Activated T-helper 2 cell treated with anti-CD3 and anti-CD28 coated beads, Interferon-gamma antibody, Interleukin-2, Interleukin-4, amounts not matched to agents 10 μg/mL and 5 μg/mL and 100 μg/mL, durations not matched to agents 14 hours and 24 hours and 36 hours (primary cell): ENCODE measurements at regions of chr6 and their contacts with region 1.

Region 1: DNA sequence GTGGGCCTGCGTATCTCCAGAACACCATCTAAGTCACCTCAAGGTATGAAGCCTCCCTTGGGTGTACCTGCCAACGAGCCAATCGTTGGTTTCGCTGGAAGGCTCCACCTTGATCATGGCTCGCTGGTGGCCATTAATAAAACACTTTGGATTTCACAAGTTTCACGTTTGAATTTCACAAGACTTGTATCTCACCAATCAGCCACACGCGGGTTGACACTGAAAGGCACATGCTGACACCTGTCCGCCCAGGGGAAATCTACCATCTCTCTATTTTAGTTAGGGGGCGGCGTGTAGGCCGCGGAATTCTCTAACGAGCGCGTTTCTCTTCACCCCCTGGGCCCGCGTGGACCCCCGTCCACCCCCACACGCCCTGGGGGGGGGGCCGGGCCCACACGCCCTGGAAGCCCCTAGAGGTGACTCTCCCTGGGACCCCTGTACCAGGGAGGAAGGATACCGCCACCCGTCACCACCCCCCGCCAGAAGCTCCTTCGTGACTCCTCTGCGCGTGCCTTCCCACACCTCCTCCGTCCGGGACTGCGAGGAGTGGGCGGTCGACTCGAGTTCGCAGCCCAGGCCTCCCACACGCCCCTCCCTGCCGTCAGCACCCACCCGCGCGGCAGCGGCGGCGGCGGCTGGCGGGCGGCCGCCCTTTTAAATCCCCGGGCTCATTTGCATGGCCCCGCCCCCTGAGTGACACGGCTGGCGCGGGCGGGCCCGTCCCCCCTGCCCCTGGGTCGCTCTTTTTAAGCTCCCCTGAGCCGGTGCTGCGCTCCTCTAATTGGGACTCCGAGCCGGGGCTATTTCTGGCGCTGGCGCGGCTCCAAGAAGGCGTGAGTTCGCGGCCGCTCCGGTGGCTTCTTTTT is at the start of gene HMGA1:
- DNase-seq: peak; percentile 83
- H3K4me3 Mint-ChIP-seq: peak within 1 kb of the TSS; percentile 86
- H3K27ac Mint-ChIP-seq: peak within 1 kb of the TSS; percentile 94
- H3K4me1 Mint-ChIP-seq: peaks cover 35% of the 10 kb centered on the region
- H3K27me3 Mint-ChIP-seq: no peaks in the 10 kb centered on the region
- total RNA-seq, gene HMGA1: 412 and 422 TPM in 2 replicates

Region 2: DNA sequence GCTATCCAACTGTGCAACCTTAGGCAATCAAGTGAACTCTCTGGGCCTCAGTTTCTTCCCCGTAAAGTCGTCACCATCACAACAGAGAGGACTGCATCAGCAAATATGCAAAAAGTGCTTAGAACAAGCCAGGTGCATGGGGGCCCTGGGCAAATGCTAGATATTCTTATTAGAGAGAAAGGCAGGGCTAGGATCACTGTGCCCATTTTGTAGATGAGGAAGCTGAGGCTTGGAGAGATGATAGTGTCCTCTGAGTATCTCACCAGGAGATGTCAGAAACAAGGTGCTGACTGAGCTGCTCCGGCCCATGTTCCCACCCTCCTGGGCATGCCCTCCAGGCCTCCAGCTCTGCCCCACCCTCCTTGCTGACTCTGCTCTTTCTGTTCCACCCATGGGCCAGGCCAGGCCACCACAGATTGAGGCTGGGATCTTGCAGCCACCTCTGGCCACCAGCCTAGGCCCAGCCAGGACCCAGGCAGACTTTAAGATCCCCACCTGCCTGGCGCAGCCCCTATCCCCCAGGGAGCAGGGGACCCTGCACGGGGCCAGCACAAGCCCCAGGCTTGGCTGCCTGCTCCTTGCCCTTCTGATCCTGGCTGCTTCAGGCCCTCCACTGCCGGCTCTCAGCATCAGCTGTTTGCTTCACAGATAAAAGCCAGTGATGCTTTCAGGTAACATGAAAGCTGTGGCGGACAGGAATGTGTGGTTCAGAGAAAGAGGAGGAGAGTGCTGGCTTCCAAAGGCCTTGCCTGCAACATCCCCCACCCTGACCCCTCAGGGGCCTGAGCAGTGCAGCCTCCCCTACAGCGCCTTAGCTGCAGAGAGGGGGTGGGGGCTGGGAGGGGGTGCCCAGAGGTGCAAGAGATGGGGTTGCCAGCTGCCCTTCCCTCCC is 138.1 kb before region 1 on chr6:
- intact Hi-C with region 1: no loop called
- DNase-seq: no peak
- H3K4me3 Mint-ChIP-seq: no peak overlapping the region
- H3K27ac Mint-ChIP-seq: no peak overlapping the region
- H3K4me1 Mint-ChIP-seq: no peaks in the 10 kb centered on the region
- H3K27me3 Mint-ChIP-seq: peaks cover 17% of the 10 kb centered on the region

Region 3: GRCh38 chr6:34157851-34158250 is 78.5 kb before region 1 on chr6:
- intact Hi-C with region 1: no loop called
- DNase-seq: no peak
- H3K4me3 Mint-ChIP-seq: no peak overlapping the region
- H3K27ac Mint-ChIP-seq: no peak overlapping the region
- H3K4me1 Mint-ChIP-seq: no peaks in the 10 kb centered on the region
- H3K27me3 Mint-ChIP-seq: peaks cover 39% of the 10 kb centered on the region

Region 4: DNA sequence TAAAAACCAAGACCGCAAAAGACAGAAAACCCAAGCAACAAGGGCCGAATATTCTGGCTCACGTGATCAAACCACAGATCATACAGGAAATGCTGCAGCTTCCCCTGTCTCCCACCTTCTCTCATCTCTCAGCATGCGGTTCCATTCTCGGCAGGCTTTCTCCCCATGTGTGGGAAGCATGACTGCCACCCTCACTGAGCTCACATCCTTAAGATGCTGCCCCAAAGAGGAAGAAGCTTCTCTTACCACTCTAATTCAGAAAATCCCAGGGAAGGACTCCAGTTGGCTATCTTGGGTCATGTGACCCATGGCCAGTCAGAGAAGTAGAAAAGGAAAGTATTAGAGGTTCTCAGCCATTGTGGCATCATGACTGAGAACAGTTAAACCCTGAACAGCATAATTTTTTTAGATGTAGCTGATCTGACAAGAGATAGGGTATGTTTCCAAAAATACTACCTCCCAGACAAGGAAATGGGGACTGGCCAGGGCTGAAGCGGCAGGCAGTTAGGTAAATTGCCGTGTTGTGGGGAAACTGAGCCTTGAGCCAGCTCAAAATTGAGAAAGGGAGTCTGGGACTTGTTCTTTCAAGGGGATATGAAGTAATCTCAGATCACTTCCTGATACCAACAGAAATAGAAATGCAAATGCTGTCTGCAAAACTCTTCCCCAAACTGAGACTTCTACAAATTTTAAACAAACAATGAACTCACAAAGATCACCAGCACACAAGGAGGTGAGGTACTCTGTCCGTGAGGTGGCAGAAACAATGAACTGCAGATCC is 53.4 kb before region 1 on chr6:
- intact Hi-C with region 1: loop called (anchors 5 kb)
- DNase-seq: peak; percentile 69
- H3K4me3 Mint-ChIP-seq: peak overlapping the region; percentile 15
- H3K27ac Mint-ChIP-seq: peak overlapping the region; percentile 66
- H3K4me1 Mint-ChIP-seq: peaks cover 11% of the 10 kb centered on the region
- H3K27me3 Mint-ChIP-seq: peaks cover 3% of the 10 kb centered on the region

Region 5: GRCh38 chr6:34196126-34196830 is 40.1 kb before region 1 on chr6:
- intact Hi-C with region 1: loop called (anchors 5 kb)
- DNase-seq: peak; percentile 77
- H3K4me3 Mint-ChIP-seq: peak overlapping the region; percentile 79
- H3K27ac Mint-ChIP-seq: no peak overlapping the region
- H3K4me1 Mint-ChIP-seq: peaks cover 6% of the 10 kb centered on the region
- H3K27me3 Mint-ChIP-seq: peaks cover 13% of the 10 kb centered on the region

Region 6: GRCh38 chr6:34223956-34224940 is 12.1 kb before region 1 on chr6:
- intact Hi-C with region 1: loop called (anchors 1 kb)
- DNase-seq: peak; percentile 91
- H3K4me3 Mint-ChIP-seq: peak overlapping the region; percentile 60
- H3K27ac Mint-ChIP-seq: peak overlapping the region; percentile 84
- H3K4me1 Mint-ChIP-seq: peaks cover 24% of the 10 kb centered on the region
- H3K27me3 Mint-ChIP-seq: peaks cover 3% of the 10 kb centered on the region

Region 7: DNA sequence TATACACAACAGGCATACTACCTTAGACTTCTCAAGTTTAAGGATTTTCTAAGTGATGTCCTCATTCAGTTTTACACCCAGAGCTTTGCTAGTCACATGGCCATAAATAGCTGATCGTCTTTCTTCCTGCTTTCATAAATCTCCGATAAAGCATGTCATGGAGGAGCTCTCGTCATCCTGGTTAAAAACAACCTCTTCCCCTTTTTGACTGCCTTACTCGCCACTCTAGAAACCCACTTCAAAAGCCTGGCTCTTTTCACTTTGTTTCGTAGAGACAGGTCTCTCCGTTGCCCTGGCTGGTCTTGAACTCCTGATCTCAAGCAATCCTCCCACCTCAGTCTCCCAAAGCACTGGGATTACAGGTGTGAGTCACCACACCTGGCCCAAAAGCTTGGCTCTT is 79.4 kb after region 1 on chr6:
- intact Hi-C with region 1: no loop called
- DNase-seq: peak; percentile 11
- H3K4me3 Mint-ChIP-seq: peak overlapping the region; percentile 5
- H3K27ac Mint-ChIP-seq: peak overlapping the region; percentile 63
- H3K4me1 Mint-ChIP-seq: peaks cover 47% of the 10 kb centered on the region
- H3K27me3 Mint-ChIP-seq: no peaks in the 10 kb centered on the region